Gastrocnemius medialis (tissue), 4 donors: ENCODE measurements at regions of chr11 and their contacts with region 1.

Region 1: GRCh38 chr11:46529095-46529905 is 64.5 kb downstream of the AMBRA1 start:
- DNase-seq: peak; percentile 25 to 36
- ATAC-seq: peak in 1 of 2 donors; percentile 82
- H3K4me3 ChIP-seq: no peak overlapping the region
- H3K27ac ChIP-seq: no peak overlapping the region
- H3K4me1 ChIP-seq: peaks cover 14 to 26% of the 10 kb centered on the region in 2 donors
- H3K27me3 ChIP-seq: no peaks in the 10 kb centered on the region
- CTCF ChIP-seq: peak; percentile 77 to 91 (median 88)
- POLR2A ChIP-seq: no peak

Region 2: GRCh38 chr11:46238967-46239800 is 290.1 kb before region 1 on chr11:
- in situ Hi-C with region 1: loop called in 2 of 4 experiments (anchors 25 kb)
- intact Hi-C with region 1: no loop called
- DNase-seq: peak; percentile 48 to 71
- ATAC-seq: peak; percentile 69 to 73
- H3K4me3 ChIP-seq: peak overlapping the region; percentile 39 to 65 (median 56)
- H3K27ac ChIP-seq: peak overlapping the region; percentile 1 to 71 (median 68)
- H3K4me1 ChIP-seq: peaks cover 10 to 22% of the 10 kb centered on the region in 2 donors
- H3K27me3 ChIP-seq: peaks cover 0 to 18% (median 6%) of the 10 kb centered on the region in 3 donors
- CTCF ChIP-seq: peak; percentile 95 to 100 (median 99)
- POLR2A ChIP-seq: no peak

Region 3: GRCh38 chr11:46369458-46370152 is 159.7 kb before region 1 on chr11:
- in situ Hi-C with region 1: no loop called
- intact Hi-C with region 1: no loop called
- DNase-seq: no peak
- ATAC-seq: no peak
- H3K4me3 ChIP-seq: no peak overlapping the region
- H3K27ac ChIP-seq: no peak overlapping the region
- H3K4me1 ChIP-seq: peaks cover 27 to 32% of the 10 kb centered on the region in 2 donors
- H3K27me3 ChIP-seq: no peaks in the 10 kb centered on the region
- CTCF ChIP-seq: peak; percentile 58 to 73 (median 73)
- POLR2A ChIP-seq: no peak

Region 4: GRCh38 chr11:46392421-46393230 is 136.7 kb before region 1 on chr11:
- in situ Hi-C with region 1: loop called in 2 of 4 experiments (anchors 5 to 10 kb)
- intact Hi-C with region 1: loop called (anchors 1 kb)
- DNase-seq: peak; percentile 54 to 78
- ATAC-seq: peak; percentile 80 to 87
- H3K4me3 ChIP-seq: peak overlapping the region; percentile 23 to 47 (median 36)
- H3K27ac ChIP-seq: no peak overlapping the region
- H3K4me1 ChIP-seq: peaks cover 19 to 23% of the 10 kb centered on the region in 2 donors
- H3K27me3 ChIP-seq: peaks cover 35 to 36% (median 36%) of the 10 kb centered on the region in 3 donors
- CTCF ChIP-seq: no peak
- POLR2A ChIP-seq: no peak

Region 5: GRCh38 chr11:46410021-46410420 is 119.3 kb before region 1 on chr11:
- in situ Hi-C with region 1: loop called in 1 of 4 experiments (anchors 25 kb)
- intact Hi-C with region 1: no loop called
- DNase-seq: no peak
- ATAC-seq: no peak
- H3K4me3 ChIP-seq: no peak overlapping the region
- H3K27ac ChIP-seq: no peak overlapping the region
- H3K4me1 ChIP-seq: peaks cover 0 to 3% of the 10 kb centered on the region in 2 donors
- H3K27me3 ChIP-seq: no peaks in the 10 kb centered on the region
- CTCF ChIP-seq: no peak
- POLR2A ChIP-seq: no peak

Region 6: GRCh38 chr11:46445920-46446771 is 83.2 kb before region 1 on chr11:
- in situ Hi-C with region 1: loop called in 1 of 4 experiments (anchors 5 kb)
- intact Hi-C with region 1: no loop called
- DNase-seq: no peak
- ATAC-seq: peak; percentile 28 to 30
- H3K4me3 ChIP-seq: no peak overlapping the region
- H3K27ac ChIP-seq: peak overlapping the region in 1 of 4 donors; percentile 0
- H3K4me1 ChIP-seq: peaks cover 19 to 45% of the 10 kb centered on the region in 2 donors
- H3K27me3 ChIP-seq: no peaks in the 10 kb centered on the region
- CTCF ChIP-seq: peak in 2 of 5 experiments; percentile 20 to 27
- POLR2A ChIP-seq: no peak

Region 7: DNA sequence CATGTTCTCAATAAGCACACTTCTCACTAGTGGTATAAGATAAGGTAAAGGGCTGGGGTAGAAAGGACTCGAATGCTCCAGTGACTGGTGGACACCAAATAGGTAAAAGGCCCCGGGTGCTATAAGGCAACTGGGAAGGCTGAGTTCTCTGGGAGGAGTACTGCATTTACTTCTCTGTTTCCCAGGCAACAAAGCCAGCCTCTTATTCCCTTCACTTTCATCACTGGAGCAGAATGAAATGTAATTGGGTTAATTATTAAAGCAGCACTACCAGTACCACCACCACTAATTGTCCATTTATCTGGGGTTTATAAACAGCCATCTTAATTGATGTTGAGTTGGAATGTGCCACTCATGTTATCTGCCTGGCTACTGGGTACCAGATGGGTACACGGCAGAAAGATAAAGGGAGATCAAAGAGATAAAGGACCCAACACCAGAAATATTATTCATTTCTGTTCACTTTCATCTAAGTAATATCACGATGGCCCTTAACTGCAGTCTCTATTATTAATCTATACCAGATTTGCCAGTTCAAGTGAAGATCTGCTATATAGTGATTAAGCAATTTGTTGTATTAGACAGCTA is 43.4 kb before region 1 on chr11:
- in situ Hi-C with region 1: no loop called
- intact Hi-C with region 1: no loop called
- DNase-seq: no peak
- ATAC-seq: no peak
- H3K4me3 ChIP-seq: no peak overlapping the region
- H3K27ac ChIP-seq: no peak overlapping the region
- H3K4me1 ChIP-seq: peaks cover 8 to 9% of the 10 kb centered on the region in 2 donors
- H3K27me3 ChIP-seq: no peaks in the 10 kb centered on the region
- CTCF ChIP-seq: no peak
- POLR2A ChIP-seq: no peak

Region 8: DNA sequence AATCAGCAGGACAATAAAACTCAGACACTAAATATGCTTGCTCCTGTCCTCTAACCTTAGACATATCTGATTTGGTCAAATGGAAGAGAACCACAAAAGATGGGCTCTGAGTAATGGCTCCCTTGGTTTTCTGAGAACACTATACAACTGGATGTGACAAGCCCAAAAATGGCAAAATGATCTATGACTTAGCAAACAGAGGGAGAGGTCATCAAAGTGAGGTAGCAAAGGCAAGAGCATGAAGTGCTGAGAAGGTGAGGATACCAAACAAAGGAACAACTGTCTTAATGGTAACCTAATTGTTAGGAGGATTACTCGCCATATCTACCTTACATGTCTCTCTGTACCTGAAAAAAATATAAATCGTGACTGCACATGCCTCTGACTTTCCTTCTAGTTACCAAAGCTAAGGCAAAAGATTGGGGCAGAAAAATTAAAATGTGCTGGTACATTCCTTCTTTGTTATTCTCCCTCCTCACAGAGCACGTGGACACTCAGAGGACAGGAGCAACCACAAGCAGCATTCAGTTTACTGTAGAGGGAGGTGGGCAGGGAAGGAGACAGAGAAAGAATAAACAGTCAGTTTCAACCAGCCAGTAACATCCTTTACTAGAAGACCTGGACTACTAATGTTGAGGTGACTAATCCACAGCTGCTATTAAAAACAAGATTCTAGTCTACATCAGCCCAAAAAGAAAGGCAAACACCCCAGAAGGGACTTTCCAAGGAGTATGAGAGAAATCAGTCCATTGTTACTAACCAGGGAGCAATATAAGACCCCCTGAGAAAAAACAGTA is 24.3 kb before region 1 on chr11:
- in situ Hi-C with region 1: no loop called
- intact Hi-C with region 1: loop called (anchors 2 kb)
- DNase-seq: no peak
- ATAC-seq: no peak
- H3K4me3 ChIP-seq: no peak overlapping the region
- H3K27ac ChIP-seq: no peak overlapping the region
- H3K4me1 ChIP-seq: no peaks in the 10 kb centered on the region
- H3K27me3 ChIP-seq: no peaks in the 10 kb centered on the region
- CTCF ChIP-seq: no peak
- POLR2A ChIP-seq: no peak